SK-N-SH (cell line): ENCODE measurements at regions of chr4 and their contacts with region 1.

Region 1: DNA sequence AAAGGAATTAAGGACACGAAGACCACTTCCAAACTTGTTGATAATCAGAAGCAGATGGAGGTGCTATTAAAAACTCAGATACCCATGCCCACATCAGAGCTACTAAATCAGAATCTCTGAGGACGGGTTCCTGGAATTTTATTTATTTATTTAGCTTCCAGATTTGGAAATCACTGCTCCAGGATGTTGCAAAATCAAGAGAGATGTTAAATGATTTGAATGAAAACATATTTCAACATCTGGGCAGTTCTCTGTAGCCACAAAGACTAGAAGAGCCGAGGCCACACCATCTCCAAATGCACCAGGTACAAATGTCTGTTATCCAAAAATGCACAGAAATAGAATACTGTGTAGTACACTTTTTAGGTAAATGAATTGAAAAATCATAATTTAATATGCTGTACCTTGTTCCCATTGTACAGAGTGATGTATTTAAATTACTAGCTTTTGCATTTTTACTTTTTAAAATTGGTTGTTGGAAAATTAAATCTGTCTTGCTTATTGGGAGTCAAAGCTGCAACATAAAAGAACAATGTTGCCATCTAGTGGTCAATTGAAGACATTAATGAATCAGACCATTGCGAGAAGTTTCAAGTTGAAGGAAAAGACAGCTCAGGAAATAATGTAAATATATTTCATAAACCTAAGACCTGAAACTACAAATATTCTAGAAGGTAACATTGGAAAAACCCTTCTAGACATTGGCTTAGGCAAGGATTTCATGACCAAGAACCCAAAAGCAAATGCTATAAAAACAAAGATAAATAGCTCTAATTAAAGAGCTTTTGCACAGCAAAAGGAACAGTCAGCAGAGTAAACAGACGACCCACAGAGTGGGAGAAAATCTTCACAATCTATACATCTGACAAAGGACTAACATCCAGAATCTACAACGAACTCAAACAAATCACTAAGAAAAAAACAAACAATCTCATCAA is 151.3 kb upstream of the TTC29 start:
- DNase-seq: peak; percentile 35
- H3K4me3 ChIP-seq: no peak overlapping the region
- H3K27ac ChIP-seq: no peak overlapping the region
- H3K4me1 ChIP-seq: no peaks in the 10 kb centered on the region; a peak in 1 of 4 replicates
- H3K27me3 ChIP-seq: no peaks in the 10 kb centered on the region
- CTCF ChIP-seq: peak; percentile 82
- EP300 ChIP-seq: no peak
- RAD21 ChIP-seq: peak; percentile 89

Region 2: DNA sequence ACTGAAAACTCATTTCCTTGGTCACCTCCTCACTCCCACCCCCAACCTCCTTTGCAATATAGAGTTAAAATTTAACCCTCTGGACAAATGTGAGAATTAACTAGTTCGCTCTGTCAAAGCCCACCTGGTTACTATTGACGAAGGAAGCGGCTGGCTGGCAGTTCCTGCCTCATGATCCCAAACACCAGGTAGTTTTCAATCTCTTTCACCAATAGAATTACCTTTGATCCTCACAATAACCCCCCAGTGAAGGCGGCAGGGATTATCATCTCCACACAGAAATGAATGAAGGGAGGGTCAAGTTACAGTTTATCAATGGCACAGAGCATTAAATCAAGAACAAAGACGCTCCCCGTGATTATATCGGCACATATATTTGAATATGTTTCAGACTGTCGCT is 85.5 kb before region 1 on chr4:
- CTCF ChIA-PET with region 1: interaction called, 23 read pairs
- POLR2A ChIA-PET with region 1: no interaction called
- DNase-seq: no peak
- H3K4me3 ChIP-seq: no peak overlapping the region
- H3K27ac ChIP-seq: no peak overlapping the region
- H3K4me1 ChIP-seq: no peaks in the 10 kb centered on the region; a peak in 2 of 4 replicates
- H3K27me3 ChIP-seq: no peaks in the 10 kb centered on the region; the same call in 1 of the 2 replicates
- CTCF ChIP-seq: no peak
- EP300 ChIP-seq: no peak
- RAD21 ChIP-seq: no peak

Region 3: GRCh38 chr4:147078875-147079658 is 17.9 kb before region 1 on chr4:
- CTCF ChIA-PET with region 1: interaction called, 17 read pairs
- POLR2A ChIA-PET with region 1: no interaction called
- DNase-seq: peak; percentile 58
- H3K4me3 ChIP-seq: no peak overlapping the region
- H3K27ac ChIP-seq: peak overlapping the region in 1 of 2 experiments; percentile 99; a peak in 2 of 4 replicates
- H3K4me1 ChIP-seq: peaks cover 0 to 26% of the 10 kb centered on the region in 2 experiments; a peak in 2 of 4 replicates
- H3K27me3 ChIP-seq: no peaks in the 10 kb centered on the region
- CTCF ChIP-seq: no peak
- EP300 ChIP-seq: peak in 1 of 2 experiments; percentile 72; a peak in 1 of 4 replicates
- RAD21 ChIP-seq: no peak

Region 4: GRCh38 chr4:147117431-147117830 is 20.5 kb after region 1 on chr4:
- CTCF ChIA-PET with region 1: interaction called, 39 read pairs
- POLR2A ChIA-PET with region 1: no interaction called
- DNase-seq: no peak
- H3K4me3 ChIP-seq: no peak overlapping the region
- H3K27ac ChIP-seq: peak overlapping the region in 1 of 2 experiments; percentile 62; a peak in 2 of 4 replicates
- H3K4me1 ChIP-seq: peaks cover 0 to 2% of the 10 kb centered on the region in 2 experiments; a peak in 2 of 4 replicates
- H3K27me3 ChIP-seq: no peaks in the 10 kb centered on the region
- CTCF ChIP-seq: no peak
- EP300 ChIP-seq: no peak
- RAD21 ChIP-seq: no peak

Region 5: DNA sequence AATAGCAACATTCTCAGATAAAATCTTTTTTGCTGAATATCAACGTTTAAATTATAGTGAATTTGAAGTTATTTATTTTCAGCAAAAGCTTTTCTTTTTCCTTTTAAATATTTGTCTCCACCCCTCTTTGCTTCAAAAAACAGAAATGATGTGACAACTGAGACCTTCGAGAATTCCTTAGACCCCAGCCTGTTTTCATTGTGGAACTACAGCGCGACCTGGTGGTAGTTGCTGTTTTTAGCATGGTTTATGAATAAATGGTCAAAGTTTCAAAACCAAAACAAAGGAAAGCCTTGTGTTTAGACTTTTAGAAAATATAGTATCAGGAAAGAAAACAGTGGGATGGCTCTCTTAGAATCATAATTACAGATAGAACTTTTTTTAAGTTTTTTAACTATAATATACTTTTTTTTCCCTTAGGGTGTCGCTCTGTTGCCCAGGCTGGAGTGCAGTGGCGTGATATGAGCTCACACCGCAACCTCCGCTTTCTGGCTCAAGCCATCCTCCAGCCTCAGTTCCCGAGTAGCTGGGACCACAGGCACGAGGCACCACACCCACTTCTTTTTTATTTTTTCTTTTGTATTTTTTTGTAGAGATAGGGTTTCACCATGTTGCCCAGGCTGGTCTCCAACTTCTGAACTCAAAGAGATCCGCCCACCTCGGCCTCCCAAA is 493.4 kb after region 1 on chr4:
- CTCF ChIA-PET with region 1: interaction called, 20 read pairs
- POLR2A ChIA-PET with region 1: no interaction called
- DNase-seq: peak; percentile 67
- H3K4me3 ChIP-seq: no peak overlapping the region
- H3K27ac ChIP-seq: no peak overlapping the region
- H3K4me1 ChIP-seq: peaks cover 7 to 12% of the 10 kb centered on the region in 2 experiments; a peak in 3 of 4 replicates
- H3K27me3 ChIP-seq: no peaks in the 10 kb centered on the region
- CTCF ChIP-seq: peak; percentile 92
- EP300 ChIP-seq: no peak
- RAD21 ChIP-seq: peak; percentile 96